ENCODE measurements at regions of chr13 and their contacts with region 1.

Region 1: GRCh38 chr13:23579072-23579895 is 9.1 kb downstream of the TNFRSF19 start:
- DNase-seq: peak; percentile 79
- ATAC-seq: peak; percentile 96
- H3K4me3 ChIP-seq: peak overlapping the region; percentile 65 to 93 (median 90)
- H3K27ac ChIP-seq: peak overlapping the region; percentile 77
- H3K4me1 ChIP-seq: peaks cover 75% of the 10 kb centered on the region
- H3K27me3 ChIP-seq: no peaks in the 10 kb centered on the region
- CTCF ChIP-seq: no peak
- EP300 ChIP-seq: no peak
- POLR2A ChIP-seq: peak in 1 of 2 experiments; percentile 77; a peak in 3 of 4 replicates
- RAD21 ChIP-seq: no peak; the same call in 1 of the 2 replicates

Region 2: GRCh38 chr13:23339225-23339624 is 240.1 kb before region 1 on chr13:
- CTCF ChIA-PET with region 1: no interaction called
- POLR2A ChIA-PET with region 1: no interaction called
- in situ Hi-C with region 1: no loop called
- intact Hi-C with region 1: no loop called
- DNase-seq: no peak
- ATAC-seq: no peak
- H3K4me3 ChIP-seq: no peak overlapping the region
- H3K27ac ChIP-seq: no peak overlapping the region
- H3K4me1 ChIP-seq: peaks cover 11% of the 10 kb centered on the region
- H3K27me3 ChIP-seq: no peaks in the 10 kb centered on the region
- CTCF ChIP-seq: no peak
- EP300 ChIP-seq: no peak
- POLR2A ChIP-seq: no peak
- RAD21 ChIP-seq: no peak

Region 3: DNA sequence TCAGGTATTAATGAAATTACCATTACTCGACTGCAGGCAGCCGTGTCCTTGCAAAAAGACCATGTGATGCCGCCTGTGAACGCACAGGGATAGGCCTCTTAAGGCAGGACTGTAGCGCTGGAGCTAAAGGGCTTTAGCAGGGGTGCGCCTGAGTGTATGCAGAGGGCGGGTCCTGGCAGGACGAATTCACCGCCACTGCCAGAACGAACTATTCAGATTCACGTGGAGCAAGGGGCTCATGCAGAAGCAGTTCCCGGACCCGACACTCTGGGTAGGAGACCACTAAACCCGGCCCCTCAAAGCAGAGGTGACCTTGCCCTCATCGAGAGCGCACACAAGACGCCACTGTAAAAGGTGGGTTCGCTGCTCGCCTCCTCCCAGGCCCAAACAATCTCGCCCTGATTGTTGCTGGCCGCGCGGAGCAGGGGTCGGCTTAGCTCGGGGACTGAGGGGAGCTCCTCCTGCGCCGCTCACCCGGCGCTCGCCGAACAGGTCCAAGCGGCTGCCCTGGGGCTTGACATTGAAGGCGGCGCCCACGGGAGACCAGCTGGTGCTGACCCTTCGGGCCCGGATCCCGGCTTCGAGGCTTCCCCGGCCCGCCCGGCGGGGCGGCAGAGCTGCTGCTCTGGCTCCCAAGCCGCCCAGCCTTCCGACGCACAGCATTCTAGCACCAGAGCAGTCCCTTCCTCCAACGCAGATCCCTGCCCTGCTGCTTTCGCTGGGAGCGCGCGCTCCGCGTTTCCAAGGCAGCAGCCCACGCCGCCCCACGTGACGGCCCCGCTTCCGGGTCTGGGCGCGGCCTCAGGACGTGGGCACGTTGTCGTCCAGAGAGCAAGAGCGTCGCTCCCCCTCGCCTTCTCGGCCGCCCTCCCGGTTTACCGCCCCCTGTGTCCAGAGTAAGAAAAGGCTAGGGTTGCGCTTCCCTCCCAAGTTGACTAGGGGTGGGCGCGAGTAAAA is 309.7 kb after region 1 on chr13 and contains the start of gene MIPEP:
- CTCF ChIA-PET with region 1: no interaction called
- POLR2A ChIA-PET with region 1: no interaction called
- in situ Hi-C with region 1: loop called (anchors 25 kb)
- intact Hi-C with region 1: loop called (anchors 5 kb)
- DNase-seq: peak; percentile 90
- ATAC-seq: peak; percentile 97
- H3K4me3 ChIP-seq: peak within 1 kb of the TSS; percentile 78 to 100 (median 96)
- H3K27ac ChIP-seq: peak within 1 kb of the TSS; percentile 70
- H3K4me1 ChIP-seq: peaks cover 35% of the 10 kb centered on the region
- H3K27me3 ChIP-seq: no peaks in the 10 kb centered on the region; a peak in 1 of 5 replicates
- CTCF ChIP-seq: peak; percentile 97
- EP300 ChIP-seq: 0 out of 4 replicates have a peak, but pooled peaks of 1 of the 2 experiments have one; percentile 14
- POLR2A ChIP-seq: peak; percentile 39 to 42; a peak in 1 of 4 replicates
- RAD21 ChIP-seq: no peak
- total RNA-seq, gene MIPEP: 24.1 and 24.7 TPM in 2 replicates